ENCODE measurements at regions of chr2 and their contacts with region 1.

Region 1: DNA sequence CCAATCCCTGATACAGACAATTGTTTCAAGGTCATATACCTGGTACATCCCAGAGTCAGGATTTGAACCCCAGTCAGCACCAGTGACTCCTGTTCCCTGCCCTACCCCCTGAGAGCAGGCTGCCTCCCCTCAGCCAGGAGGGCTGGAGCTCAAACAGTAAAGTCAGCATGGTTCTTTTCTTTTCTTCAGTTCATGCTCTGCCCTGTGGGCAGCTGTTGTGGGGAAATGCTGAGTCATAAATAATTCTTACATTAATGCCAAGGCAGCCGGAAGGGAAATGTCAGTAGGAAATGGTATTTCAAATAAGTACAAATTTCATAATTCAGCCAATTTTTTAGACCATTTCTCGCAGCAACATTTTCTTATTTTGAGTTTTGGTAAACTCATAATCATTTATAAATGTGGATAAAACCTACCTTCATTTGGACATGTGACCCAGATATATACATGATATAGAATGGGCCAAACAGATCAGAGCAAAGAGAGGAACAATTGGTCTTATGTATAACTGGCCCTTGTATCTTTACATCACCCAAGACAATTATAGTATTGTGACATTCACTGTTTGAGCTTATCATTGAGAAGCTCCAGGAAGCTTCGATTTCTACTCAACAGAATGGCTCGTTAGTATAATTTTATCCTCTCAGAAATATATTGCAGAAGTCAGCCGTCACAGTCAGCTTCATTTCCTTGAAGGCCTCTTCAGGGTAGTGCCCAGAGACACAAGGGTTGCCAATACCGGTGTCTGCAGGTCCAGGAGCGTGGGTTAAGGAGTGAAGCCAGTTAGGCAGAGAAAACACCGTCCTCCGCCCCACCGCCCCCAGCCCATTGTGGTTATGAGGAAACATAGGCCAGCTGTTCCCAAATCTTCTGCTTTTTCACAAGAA is 28.0 kb upstream of the SCYGR1 start:
- DNase-seq: peak; percentile 74
- H3K27ac ChIP-seq: peak overlapping the region; percentile 75
- CTCF ChIP-seq: no peak

Region 2: GRCh38 chr2:227471924-227472264 is 56.1 kb after region 1 on chr2 and contains the start of gene AGFG1:
- CTCF ChIA-PET with region 1: no interaction called
- POLR2A ChIA-PET with region 1: interaction called, 11 read pairs
- DNase-seq: peak; percentile 91
- H3K27ac ChIP-seq: peak within 1 kb of the TSS; percentile 77
- CTCF ChIP-seq: peak; percentile 96

Measured in RWPE1 (cell line).